Colonic mucosa (tissue), 4 donors: ENCODE measurements at regions of chr5 and their contacts with region 1.

Region 1: DNA sequence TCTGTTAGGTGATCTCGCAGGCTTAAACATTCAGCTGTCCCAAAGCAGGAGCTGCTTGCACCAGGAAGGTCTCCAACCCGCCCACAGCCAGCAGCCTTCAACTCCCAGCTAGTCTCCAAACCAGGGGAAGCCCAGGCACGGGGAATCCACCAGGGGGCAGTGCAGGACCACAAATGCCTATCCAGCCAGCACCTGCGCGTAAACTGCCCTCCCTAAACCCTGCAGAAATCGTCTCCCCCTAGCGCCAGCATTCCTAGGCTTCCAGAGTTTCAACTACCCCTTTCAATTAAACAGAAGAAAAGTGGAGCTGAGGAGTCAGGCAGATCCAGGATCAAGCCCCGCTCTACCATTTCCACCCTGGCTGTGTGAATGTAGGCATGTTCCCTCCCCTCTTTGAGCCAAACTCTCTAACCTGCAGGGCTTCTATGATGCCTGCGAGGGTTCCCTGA is 72.0 kb downstream of the HRH2 start:
- DNase-seq: peak; percentile 93
- H3K4me3 ChIP-seq: no peak overlapping the region
- H3K27ac ChIP-seq: no peak overlapping the region
- H3K4me1 ChIP-seq: no peaks in the 10 kb centered on the region
- H3K27me3 ChIP-seq: peaks cover 4% of the 10 kb centered on the region
- CTCF ChIP-seq: peak; percentile 92

Region 2: GRCh38 chr5:175548626-175549311 is 181.1 kb before region 1 on chr5:
- intact Hi-C with region 1: no loop called
- DNase-seq: no peak
- H3K4me3 ChIP-seq: no peak overlapping the region
- H3K27ac ChIP-seq: no peak overlapping the region
- H3K4me1 ChIP-seq: no peaks in the 10 kb centered on the region
- H3K27me3 ChIP-seq: no peaks in the 10 kb centered on the region
- CTCF ChIP-seq: no peak

Region 3: DNA sequence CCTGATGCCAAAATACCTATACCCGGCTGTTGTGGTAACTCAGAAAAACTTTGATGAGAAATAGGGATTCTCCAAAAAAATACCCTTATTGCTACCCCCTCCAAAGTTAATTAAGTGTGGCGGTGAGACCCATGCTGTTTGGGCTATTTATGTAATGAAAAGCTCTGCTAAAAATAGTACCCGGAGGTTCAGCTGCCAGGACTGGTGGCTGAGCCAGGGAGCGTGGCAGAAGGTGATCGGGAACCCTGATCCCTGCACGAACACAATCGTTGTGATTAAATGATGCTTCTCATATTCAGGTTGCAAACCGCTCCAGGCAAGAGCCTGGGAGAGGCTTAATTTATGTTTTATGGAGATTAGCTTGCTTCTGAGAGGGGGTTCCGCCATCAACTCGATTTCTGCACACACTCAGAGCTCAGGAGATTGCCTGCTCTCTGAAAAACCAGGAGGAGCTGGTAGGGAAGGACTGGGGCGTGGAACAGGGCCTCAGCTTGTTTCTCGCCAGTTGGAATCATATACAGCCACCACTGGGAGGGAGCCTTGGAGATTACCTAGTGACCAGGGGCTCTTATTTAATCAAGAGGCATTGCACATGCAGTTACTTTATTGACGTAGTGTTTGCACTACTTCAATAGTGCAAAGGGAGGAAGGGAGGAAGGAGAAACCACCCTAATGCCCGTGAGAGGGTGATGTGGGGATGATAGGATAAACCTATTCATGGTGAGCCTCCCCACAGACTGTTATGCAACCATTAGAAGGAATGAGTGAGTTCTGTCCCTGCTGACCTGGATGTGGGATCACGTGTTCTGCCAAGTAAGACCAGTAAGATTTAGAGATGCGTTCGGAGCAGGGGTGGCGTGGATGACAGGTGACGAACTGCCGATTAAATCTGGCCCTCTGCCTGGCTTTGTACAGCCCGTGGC is 48.5 kb before region 1 on chr5:
- intact Hi-C with region 1: no loop called
- DNase-seq: no peak
- H3K4me3 ChIP-seq: no peak overlapping the region
- H3K27ac ChIP-seq: no peak overlapping the region
- H3K4me1 ChIP-seq: no peaks in the 10 kb centered on the region
- H3K27me3 ChIP-seq: no peaks in the 10 kb centered on the region
- CTCF ChIP-seq: no peak

Region 4: GRCh38 chr5:175889910-175890684 is 160.2 kb after region 1 on chr5:
- intact Hi-C with region 1: loop called (anchors 10 kb)
- DNase-seq: no peak
- H3K4me3 ChIP-seq: no peak overlapping the region
- H3K27ac ChIP-seq: no peak overlapping the region
- H3K4me1 ChIP-seq: no peaks in the 10 kb centered on the region
- H3K27me3 ChIP-seq: no peaks in the 10 kb centered on the region
- CTCF ChIP-seq: no peak